ENCODE measurements at regions of chr4 and their contacts with region 1.

Region 1: DNA sequence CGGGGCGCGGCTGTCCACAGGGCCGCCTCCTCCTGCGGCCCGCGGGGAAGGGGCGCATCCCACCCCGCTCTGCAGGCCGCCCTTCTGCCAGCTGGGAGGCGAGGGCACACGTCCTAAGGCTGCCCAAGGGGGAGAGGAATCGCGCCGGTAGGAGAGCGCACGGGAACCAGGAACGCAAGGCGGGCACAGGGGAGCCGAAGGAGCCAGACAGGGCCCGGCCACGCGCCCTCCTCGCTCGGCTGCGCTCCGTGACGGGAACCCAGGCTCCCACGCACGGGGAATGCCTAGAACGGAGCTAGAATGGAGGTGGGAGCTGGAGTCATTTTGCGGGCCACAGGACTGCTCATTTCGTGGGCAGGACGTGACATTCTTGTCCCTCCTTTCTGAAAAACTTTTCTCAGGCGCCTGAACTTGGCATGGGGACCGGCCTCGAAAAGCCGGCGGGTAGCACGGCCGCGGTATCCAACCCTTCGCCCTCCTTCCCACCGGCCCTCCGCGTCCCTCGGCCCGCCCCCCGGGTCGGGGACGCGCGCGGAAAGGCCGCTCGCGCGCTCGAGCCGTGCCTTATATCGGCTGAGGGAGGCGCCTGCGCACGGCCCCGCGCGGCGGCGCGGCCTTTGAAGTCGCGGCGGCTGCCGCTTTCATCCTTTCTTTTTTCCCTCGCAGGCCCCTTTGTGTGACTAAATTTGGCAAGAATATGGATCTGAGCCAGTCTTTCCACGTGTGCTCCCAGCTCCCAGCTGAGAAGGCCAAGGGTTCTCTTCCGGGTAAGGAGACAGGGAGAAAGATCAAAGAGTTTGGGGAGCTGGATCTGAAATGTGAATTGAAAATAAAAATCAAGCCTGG is 4.2 kb upstream of the LEF1 start:
- DNase-seq: peak; percentile 53 to 85
- ATAC-seq: peak; percentile 74 to 76 (median 75)
- H3K4me3 ChIP-seq: peak overlapping the region; percentile 61
- H3K4me3 Mint-ChIP-seq: peak overlapping the region; percentile 89
- H3K27ac ChIP-seq: no peak overlapping the region
- H3K27ac Mint-ChIP-seq: peak overlapping the region in 1 of 2 donors; percentile 56
- H3K4me1 ChIP-seq: peaks cover 36% of the 10 kb centered on the region
- H3K4me1 Mint-ChIP-seq: peaks cover 27 to 50% of the 10 kb centered on the region in 2 donors
- H3K27me3 ChIP-seq: peaks cover 38% of the 10 kb centered on the region
- H3K27me3 Mint-ChIP-seq: peaks cover 47 to 48% of the 10 kb centered on the region in 2 donors
- CTCF ChIP-seq: no peak

Region 2: DNA sequence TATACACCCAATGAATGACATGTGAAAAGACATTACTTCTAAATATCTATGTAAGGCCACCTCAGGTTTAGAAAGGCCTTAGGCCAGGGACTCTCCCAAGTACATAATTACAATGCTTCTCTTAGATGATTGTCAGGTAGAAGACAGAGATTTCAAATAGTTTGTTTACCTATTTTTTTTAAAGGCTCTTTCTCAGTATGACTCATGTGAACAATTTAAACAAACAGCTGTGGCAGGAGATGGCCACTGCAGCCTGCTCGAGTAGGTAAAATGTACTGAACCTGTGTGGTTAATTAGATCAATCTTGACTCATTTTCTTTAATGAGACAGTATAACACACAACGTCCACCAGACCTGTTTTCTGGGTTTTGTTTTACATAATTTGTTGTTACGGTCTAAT is 54.5 kb before region 1 on chr4:
- intact Hi-C with region 1: loop called (anchors 5 kb)
- DNase-seq: peak in 1 of 2 donors; percentile 63
- ATAC-seq: peak in 1 of 3 donors; percentile 19
- H3K4me3 ChIP-seq: no peak overlapping the region
- H3K4me3 Mint-ChIP-seq: peak overlapping the region; percentile 11
- H3K27ac ChIP-seq: no peak overlapping the region
- H3K27ac Mint-ChIP-seq: no peak overlapping the region
- H3K4me1 ChIP-seq: peaks cover 28% of the 10 kb centered on the region
- H3K4me1 Mint-ChIP-seq: peaks cover 59 to 63% of the 10 kb centered on the region in 2 donors
- H3K27me3 ChIP-seq: no peaks in the 10 kb centered on the region
- H3K27me3 Mint-ChIP-seq: no peaks in the 10 kb centered on the region
- CTCF ChIP-seq: no peak

Region 3: DNA sequence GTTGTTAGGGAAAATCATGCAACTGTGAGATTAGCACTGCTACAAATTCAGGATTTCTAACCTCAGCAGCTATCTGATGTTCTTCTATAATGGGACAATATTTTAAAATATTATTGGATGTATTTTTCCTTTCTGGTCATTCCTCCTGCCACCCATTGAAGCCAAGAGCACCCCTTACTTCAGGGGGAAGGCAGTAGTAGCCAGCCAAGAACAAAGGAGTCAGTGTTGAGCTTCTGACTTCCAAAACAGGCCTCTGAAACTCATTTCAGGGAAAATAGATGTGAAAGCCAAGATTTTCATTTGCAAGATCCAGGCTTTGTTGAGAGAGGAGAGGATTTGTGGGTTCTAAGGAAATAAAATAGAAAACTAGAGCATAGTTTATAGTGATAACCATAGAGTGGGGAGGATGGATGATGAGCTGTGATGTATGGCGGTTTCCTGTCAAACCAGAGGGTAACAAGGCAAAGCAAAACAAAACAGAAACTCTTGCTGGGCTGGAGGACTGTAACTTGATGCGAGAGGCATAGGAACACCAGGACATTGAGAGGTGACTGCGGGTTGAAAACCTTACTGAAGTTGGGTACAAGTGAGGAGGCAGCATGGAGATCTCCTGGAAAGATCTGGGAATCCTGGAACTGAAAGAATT is 169.5 kb after region 1 on chr4:
- intact Hi-C with region 1: loop called (anchors 5 kb)
- DNase-seq: peak in 1 of 2 donors; percentile 68
- ATAC-seq: peak in 2 of 3 donors; percentile 78 to 99
- H3K4me3 ChIP-seq: no peak overlapping the region
- H3K4me3 Mint-ChIP-seq: peak overlapping the region; percentile 57
- H3K27ac ChIP-seq: peak overlapping the region; percentile 43
- H3K27ac Mint-ChIP-seq: peak overlapping the region in 1 of 2 donors; percentile 21
- H3K4me1 ChIP-seq: peaks cover 12% of the 10 kb centered on the region
- H3K4me1 Mint-ChIP-seq: peaks cover 14 to 15% of the 10 kb centered on the region in 2 donors
- H3K27me3 ChIP-seq: peaks cover 4% of the 10 kb centered on the region
- H3K27me3 Mint-ChIP-seq: peaks cover 7 to 27% of the 10 kb centered on the region in 2 donors
- CTCF ChIP-seq: no peak

Region 4: DNA sequence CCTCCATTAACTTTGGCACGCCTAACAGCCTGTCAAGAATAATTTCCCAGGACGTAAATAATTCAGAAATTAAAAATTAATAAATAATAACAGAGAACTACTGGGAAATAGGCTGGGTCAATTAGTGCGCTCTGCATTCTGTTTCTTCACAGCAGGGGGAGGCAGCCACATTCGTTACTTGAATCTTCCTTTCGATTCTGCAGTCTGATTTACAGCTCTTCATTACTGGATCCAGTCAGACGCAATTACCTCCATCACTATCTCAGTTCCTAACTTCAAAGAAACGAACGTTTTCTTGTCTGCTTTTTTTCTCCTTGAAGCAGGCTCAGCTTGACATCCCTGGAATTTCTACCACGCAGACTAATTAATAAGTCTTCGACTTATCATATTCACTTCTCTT is 438.4 kb after region 1 on chr4:
- intact Hi-C with region 1: no loop called
- DNase-seq: peak in 1 of 2 donors; percentile 21
- ATAC-seq: no peak
- H3K4me3 ChIP-seq: no peak overlapping the region
- H3K4me3 Mint-ChIP-seq: no peak overlapping the region
- H3K27ac ChIP-seq: no peak overlapping the region
- H3K27ac Mint-ChIP-seq: no peak overlapping the region
- H3K4me1 ChIP-seq: no peaks in the 10 kb centered on the region
- H3K4me1 Mint-ChIP-seq: no peaks in the 10 kb centered on the region
- H3K27me3 ChIP-seq: no peaks in the 10 kb centered on the region
- H3K27me3 Mint-ChIP-seq: peaks cover 0 to 11% of the 10 kb centered on the region in 2 donors
- CTCF ChIP-seq: no peak